A549 (cell line): ENCODE measurements at regions of chr7 and their contacts with region 1.

Region 1: GRCh38 chr7:99438573-99439480 is at the starts of genes CPSF4 and PTCD1:
- DNase-seq: peak; percentile 93 to 98
- ATAC-seq: peak; percentile 95 to 96
- H3K4me3 ChIP-seq: peak within 1 kb of the TSS; percentile 86
- H3K27ac ChIP-seq: peak within 1 kb of the TSS; percentile 93 to 99
- H3K4me1 ChIP-seq: peaks cover 18% of the 10 kb centered on the region; the same call in 2 of the 3 replicates
- CTCF ChIP-seq: no peak
- EP300 ChIP-seq: no peak
- POLR2A ChIP-seq: peak; percentile 64
- RAD21 ChIP-seq: no peak
- polyA plus RNA-seq, gene CPSF4: 28.7 and 31.3 TPM in 2 replicates
- polyA plus RNA-seq, gene PTCD1: 3.9 and 5.1 TPM in 2 replicates

Region 2: GRCh38 chr7:99392677-99393354 is 46.0 kb before region 1 on chr7:
- CTCF ChIA-PET with region 1: no interaction called
- POLR2A ChIA-PET with region 1: no interaction called
- DNase-seq: no peak
- ATAC-seq: no peak
- H3K4me3 ChIP-seq: no peak overlapping the region
- H3K27ac ChIP-seq: no peak overlapping the region
- H3K4me1 ChIP-seq: no peaks in the 10 kb centered on the region
- CTCF ChIP-seq: no peak
- EP300 ChIP-seq: no peak
- POLR2A ChIP-seq: no peak
- RAD21 ChIP-seq: no peak

Region 3: GRCh38 chr7:99472561-99473243 is 33.9 kb after region 1 on chr7 and contains the start of gene ZNF789:
- CTCF ChIA-PET with region 1: interaction called, 92 read pairs
- POLR2A ChIA-PET with region 1: interaction called, 10 read pairs
- DNase-seq: peak; percentile 98 to 99
- ATAC-seq: peak; percentile 98 to 99
- H3K4me3 ChIP-seq: peak within 1 kb of the TSS; percentile 84
- H3K27ac ChIP-seq: peak within 1 kb of the TSS; percentile 83 to 89
- H3K4me1 ChIP-seq: peaks cover 10% of the 10 kb centered on the region; the same call in 1 of the 3 replicates
- CTCF ChIP-seq: no peak
- EP300 ChIP-seq: no peak
- POLR2A ChIP-seq: peak; percentile 55
- RAD21 ChIP-seq: no peak
- polyA plus RNA-seq, gene ZNF789: 11.6 and 12.6 TPM in 2 replicates

Region 4: DNA sequence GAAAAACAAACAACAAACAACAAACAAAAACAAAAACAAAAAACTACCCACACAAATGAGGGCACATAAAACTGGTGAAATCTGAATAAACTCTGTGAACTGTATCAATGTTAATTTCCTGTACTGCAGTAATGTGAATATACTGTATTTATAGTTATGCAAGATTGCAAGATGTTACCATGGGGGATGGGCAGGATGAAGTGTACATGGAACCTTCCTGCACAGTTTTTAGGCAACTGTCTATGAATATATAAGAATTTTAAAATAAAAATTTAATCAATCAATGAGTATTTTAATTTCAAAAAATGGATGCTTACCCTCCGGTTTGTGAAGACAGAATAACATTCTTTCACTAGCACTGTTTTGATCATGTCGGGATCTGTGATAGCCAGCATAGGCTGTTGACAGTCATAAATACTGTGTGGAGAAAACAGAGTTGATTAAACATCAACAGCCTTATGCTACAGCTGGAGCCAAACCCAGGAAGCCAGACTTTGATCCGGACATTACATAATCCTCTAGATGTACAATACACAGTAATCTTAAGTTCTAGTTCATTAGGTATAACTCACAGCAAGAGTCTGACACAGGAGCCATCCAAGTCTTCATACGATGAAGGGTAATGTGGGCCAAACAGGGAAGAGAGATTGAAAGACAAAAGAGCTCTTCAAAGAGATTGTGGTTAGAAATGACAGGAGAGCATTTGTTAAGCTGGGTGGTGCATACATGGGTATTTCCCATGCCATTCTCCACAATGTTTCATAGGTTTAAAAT is 281.4 kb after region 1 on chr7:
- CTCF ChIA-PET with region 1: no interaction called
- POLR2A ChIA-PET with region 1: no interaction called
- DNase-seq: no peak
- ATAC-seq: no peak
- H3K4me3 ChIP-seq: no peak overlapping the region
- H3K27ac ChIP-seq: no peak overlapping the region
- H3K4me1 ChIP-seq: 0 out of 3 replicates have a peak, but pooled peaks cover 5% of the 10 kb centered on the region
- CTCF ChIP-seq: no peak
- EP300 ChIP-seq: no peak
- POLR2A ChIP-seq: no peak
- RAD21 ChIP-seq: no peak